AG04450 (cell line): ENCODE measurements at regions of chr1 and their contacts with region 1.

Region 1: DNA sequence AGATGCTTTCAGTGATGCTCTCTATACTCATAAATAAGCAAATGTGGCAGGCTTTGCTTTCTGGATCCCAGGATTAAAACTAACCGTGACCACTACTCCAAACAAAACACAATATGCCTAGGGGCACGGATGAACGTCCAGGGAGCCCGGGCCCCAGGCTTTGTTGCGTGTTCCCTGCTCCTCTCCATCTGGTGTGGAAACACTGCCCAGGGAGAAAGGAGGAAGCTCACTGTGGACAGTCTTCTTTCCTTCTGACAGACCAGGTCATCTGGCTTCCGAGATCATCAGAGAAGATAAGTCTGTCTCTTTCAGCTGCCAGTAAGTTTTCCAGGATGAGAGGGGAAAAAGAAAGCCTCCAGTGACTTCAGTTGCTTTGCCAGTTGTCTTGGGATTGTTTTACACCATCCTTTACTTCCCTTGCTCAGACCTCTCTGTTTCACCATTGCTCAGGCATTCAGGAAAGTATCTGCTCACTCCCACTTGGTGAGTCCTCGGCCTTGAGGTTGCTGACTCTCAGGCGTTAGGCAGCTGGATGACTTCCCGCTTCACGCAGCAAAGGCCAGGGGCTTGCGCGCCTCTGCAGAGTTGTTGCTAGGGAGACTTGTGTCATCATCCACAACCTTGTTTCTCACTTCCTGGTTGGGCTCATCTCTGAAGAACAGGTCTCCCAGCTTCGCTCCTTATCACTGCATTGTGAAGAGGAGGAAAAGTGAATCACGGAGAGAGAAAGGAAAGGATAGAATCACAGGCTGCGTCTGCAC is 20.6 kb upstream of the PGD start:
- DNase-seq: peak; percentile 64
- H3K4me3 ChIP-seq: no peak overlapping the region
- H3K27ac ChIP-seq: peak overlapping the region; percentile 93
- H3K27me3 ChIP-seq: no peaks in the 10 kb centered on the region
- CTCF ChIP-seq: no peak

Region 2: DNA sequence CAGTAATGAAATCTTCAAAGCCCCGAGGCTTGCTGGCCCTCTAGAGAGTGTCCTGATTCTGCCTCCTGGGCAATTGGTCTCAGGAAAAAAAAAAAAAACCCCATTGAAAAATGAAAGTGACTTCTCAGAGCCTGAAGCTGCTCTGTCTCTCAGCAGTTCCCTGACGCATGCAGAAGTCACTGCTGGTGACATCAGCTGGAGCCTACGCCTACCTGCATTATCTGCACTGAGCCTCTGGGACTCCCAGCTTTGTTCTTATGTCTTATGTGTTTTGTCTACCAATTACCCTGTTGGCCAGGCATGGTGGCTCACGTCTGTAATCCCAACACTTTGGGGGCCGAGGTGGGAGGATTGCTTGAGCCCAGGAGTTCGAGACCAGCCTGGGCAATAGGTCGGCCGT is 849.1 kb before region 1 on chr1:
- CTCF ChIA-PET with region 1: no interaction called
- POLR2A ChIA-PET with region 1: no interaction called
- DNase-seq: no peak
- H3K4me3 ChIP-seq: no peak overlapping the region
- H3K27ac ChIP-seq: no peak overlapping the region
- H3K27me3 ChIP-seq: peaks cover 4% of the 10 kb centered on the region
- CTCF ChIP-seq: no peak

Region 3: DNA sequence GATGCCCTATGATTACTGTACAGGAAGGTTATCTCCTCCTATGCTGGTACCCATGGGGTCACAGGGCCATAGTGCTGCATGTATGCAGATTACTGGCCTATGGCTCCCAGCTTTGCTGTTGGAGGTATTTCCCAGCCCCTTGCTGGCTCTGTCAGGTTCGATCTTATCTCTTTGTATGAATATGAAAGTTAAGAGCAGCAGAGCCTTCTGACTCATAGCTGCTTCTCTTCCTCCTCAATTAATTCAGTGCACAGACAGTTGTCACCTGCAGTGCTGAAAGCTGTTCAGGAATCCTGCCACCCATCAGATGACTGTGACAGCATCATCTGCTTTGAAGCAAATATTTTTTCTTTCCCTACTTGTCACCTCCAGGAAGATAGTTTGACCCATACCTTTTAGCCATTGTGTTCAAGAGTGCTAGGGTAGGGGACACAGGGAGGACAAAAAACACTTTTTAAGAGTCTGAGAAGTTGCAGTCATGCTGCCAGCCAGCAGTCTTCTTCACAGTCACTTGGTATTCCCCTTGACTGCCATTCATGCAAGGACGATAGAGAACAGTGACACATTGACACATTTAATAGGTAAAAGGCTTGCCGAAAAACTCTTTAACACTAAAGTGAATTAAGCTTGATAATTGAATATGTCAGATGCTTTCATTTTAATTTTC is 94.8 kb before region 1 on chr1:
- CTCF ChIA-PET with region 1: no interaction called
- POLR2A ChIA-PET with region 1: no interaction called
- DNase-seq: no peak
- H3K4me3 ChIP-seq: no peak overlapping the region
- H3K27ac ChIP-seq: no peak overlapping the region
- H3K27me3 ChIP-seq: no peaks in the 10 kb centered on the region
- CTCF ChIP-seq: no peak

Region 4: DNA sequence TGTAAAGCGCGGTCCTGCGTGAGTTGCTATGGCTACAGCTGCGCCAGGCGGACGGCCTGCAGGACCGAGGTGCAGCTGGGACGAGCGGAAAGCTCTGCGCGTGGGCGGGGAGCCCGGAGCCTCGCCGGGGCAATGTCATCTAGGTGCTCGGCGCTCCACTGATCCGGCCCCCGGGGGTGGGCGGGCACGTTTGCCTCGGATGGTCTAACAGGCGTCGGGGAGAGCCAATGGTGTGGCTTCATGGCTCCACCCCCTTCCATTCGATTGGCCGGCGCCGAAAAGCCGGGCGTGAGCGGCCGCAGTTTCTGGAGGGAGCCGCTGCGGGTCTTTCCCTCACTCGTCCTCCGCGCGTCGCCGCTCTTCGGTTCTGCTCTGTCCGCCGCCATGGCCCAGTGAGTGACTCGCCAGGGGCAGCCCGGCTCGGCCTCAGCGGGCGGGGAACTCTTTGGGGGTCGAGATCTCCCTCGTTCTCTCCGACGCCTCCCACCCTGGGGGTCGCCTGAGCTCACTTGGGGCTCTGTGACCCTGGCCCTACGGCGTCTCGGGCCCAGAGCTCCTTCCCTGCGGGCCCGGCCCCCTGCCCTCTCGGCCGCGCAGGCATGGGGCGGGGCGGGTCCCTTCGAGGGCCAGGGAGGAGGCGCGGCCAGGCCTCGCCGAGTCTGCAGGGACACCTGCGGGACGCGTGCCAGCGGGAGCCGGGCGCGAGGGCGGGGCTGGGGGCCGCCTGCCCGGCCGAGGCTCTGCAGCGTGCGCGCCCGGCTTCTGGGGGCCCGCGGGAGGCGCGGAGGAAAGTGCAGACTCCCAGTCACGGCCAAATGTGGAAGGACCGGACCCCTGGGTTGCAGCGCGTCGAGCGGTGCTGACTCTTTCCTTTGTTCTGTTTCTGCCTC is 20.7 kb after region 1 on chr1 and contains the start of gene PGD:
- CTCF ChIA-PET with region 1: interaction called, 18 read pairs
- POLR2A ChIA-PET with region 1: interaction called, 42 read pairs
- DNase-seq: peak; percentile 97
- H3K4me3 ChIP-seq: peak within 1 kb of the TSS; percentile 92
- H3K27ac ChIP-seq: peak within 1 kb of the TSS; percentile 91
- H3K27me3 ChIP-seq: no peaks in the 10 kb centered on the region
- CTCF ChIP-seq: no peak
- polyA plus RNA-seq, gene PGD: 155 and 233 TPM in 2 replicates

Region 5: GRCh38 chr1:10424034-10424433 is 45.8 kb after region 1 on chr1:
- CTCF ChIA-PET with region 1: interaction called, 78 read pairs
- POLR2A ChIA-PET with region 1: no interaction called
- DNase-seq: no peak
- H3K4me3 ChIP-seq: no peak overlapping the region
- H3K27ac ChIP-seq: peak overlapping the region; percentile 61
- H3K27me3 ChIP-seq: no peaks in the 10 kb centered on the region
- CTCF ChIP-seq: no peak

Region 6: GRCh38 chr1:10430216-10431069 is 52.2 kb after region 1 on chr1 and contains the start of gene CENPS:
- CTCF ChIA-PET with region 1: interaction called, 78 read pairs
- POLR2A ChIA-PET with region 1: interaction called, 7 read pairs
- DNase-seq: peak; percentile 55
- H3K4me3 ChIP-seq: peak within 1 kb of the TSS; percentile 87
- H3K27ac ChIP-seq: peak within 1 kb of the TSS; percentile 68
- H3K27me3 ChIP-seq: no peaks in the 10 kb centered on the region
- CTCF ChIP-seq: peak; percentile 86
- polyA plus RNA-seq, gene CENPS: 10.5 and 11.4 TPM in 2 replicates

Region 7: GRCh38 chr1:10530281-10530740 is 152.1 kb after region 1 on chr1:
- CTCF ChIA-PET with region 1: no interaction called
- POLR2A ChIA-PET with region 1: no interaction called
- DNase-seq: no peak
- H3K4me3 ChIP-seq: peak overlapping the region; percentile 52
- H3K27ac ChIP-seq: peak overlapping the region; percentile 81
- H3K27me3 ChIP-seq: no peaks in the 10 kb centered on the region
- CTCF ChIP-seq: peak; percentile 98

Region 8: DNA sequence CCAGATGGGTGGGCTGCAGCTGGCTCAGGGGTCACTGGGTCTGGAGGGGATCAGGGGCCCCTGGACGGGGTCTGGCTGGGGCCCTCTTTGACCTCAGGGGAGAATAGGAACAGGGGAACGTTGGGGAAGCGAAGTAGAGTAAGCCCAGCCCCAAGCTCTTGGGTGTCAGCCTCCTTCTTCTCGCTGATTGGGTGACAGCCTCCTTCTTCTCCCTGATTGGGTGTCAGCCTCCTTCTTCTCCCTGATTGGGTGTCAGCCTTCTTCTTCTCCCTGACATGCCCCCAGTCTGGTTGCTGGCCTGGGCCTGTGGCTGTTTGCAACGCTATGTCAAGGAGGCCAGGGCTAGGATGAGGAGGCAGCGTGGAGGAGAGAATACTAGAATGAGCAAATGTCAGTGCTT is 494.9 kb after region 1 on chr1:
- CTCF ChIA-PET with region 1: no interaction called
- POLR2A ChIA-PET with region 1: no interaction called
- DNase-seq: no peak
- H3K4me3 ChIP-seq: no peak overlapping the region
- H3K27ac ChIP-seq: no peak overlapping the region
- H3K27me3 ChIP-seq: peaks cover 20% of the 10 kb centered on the region
- CTCF ChIP-seq: no peak